ENCODE measurements at regions of chr1 and their contacts with region 1.

Region 1: GRCh38 chr1:27671964-27672749 is at the start of gene IFI6:
- DNase-seq: peak; percentile 99
- H3K4me3 ChIP-seq: peak within 1 kb of the TSS; percentile 40
- H3K27ac ChIP-seq: peak within 1 kb of the TSS; percentile 62
- H3K4me1 ChIP-seq: peaks cover 9% of the 10 kb centered on the region
- H3K27me3 ChIP-seq: no peaks in the 10 kb centered on the region
- CTCF ChIP-seq: peak; percentile 49
- total RNA-seq, gene IFI6: 18.7 and 19.4 TPM in 2 replicates

Region 2: GRCh38 chr1:27402349-27402754 is 269.8 kb before region 1 on chr1:
- CTCF ChIA-PET with region 1: no interaction called
- POLR2A ChIA-PET with region 1: no interaction called
- intact Hi-C with region 1: loop called (anchors 5 kb)
- DNase-seq: peak; percentile 45
- H3K4me3 ChIP-seq: no peak overlapping the region
- H3K27ac ChIP-seq: no peak overlapping the region
- H3K4me1 ChIP-seq: no peaks in the 10 kb centered on the region
- H3K27me3 ChIP-seq: no peaks in the 10 kb centered on the region
- CTCF ChIP-seq: peak; percentile 45

Region 3: GRCh38 chr1:27872059-27872801 is 200.1 kb after region 1 on chr1 and contains the start of gene THEMIS2:
- CTCF ChIA-PET with region 1: no interaction called
- POLR2A ChIA-PET with region 1: no interaction called
- intact Hi-C with region 1: no loop called
- DNase-seq: peak; percentile 78
- H3K4me3 ChIP-seq: peak within 1 kb of the TSS; percentile 62
- H3K27ac ChIP-seq: no peak within 1 kb of the TSS
- H3K4me1 ChIP-seq: no peaks in the 10 kb centered on the region
- H3K27me3 ChIP-seq: no peaks in the 10 kb centered on the region
- CTCF ChIP-seq: no peak
- total RNA-seq, gene THEMIS2: 2.0 and 5.0 TPM in 2 replicates

Measured in A673 (cell line).